ENCODE measurements at regions of chr4 and their contacts with region 1.

Region 1: DNA sequence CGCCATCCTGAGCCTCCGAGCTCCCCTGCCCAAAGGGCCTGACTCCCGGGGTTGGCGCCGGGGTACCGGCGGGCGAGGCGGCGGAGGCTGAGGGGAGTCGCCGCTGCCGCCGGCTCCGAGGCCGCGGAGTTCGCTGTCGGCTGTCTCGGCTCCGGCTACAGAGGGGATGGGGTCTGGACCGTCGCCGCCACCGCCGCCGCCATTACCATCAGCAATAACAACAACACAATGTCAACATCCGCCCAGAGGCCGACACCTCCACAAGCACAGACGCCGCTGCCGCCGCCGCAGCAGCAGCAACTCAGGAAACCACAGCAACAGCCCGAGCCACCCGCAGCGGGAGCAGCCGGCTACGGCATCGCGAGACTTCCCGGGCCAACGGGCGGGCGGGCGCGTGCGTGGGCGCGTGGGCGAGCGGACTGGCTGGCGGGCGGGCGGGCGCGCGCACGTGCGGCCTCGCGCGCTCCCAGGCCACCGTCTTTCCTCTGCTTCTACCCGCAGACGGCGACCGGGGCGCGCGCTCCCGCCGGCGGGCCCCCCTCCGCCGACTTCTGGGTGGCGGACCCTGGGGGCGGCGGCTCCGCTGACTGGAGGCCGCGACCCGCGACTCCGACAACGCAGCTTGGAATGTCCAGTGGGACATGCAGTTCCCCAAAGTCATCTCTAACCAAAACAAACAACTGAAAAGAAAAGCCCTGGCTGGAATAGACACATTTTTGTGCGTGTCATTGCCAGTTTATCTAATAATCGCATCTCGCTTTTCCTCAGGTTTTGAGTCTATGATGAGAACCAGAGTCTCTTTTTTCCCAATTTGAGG is at the start of gene CHIC2:
- DNase-seq: peak; percentile 94
- H3K4me3 ChIP-seq: peak within 1 kb of the TSS; percentile 55 to 98 (median 96)
- H3K27ac ChIP-seq: peak within 1 kb of the TSS; percentile 96
- H3K4me1 ChIP-seq: peaks cover 66% of the 10 kb centered on the region
- H3K27me3 ChIP-seq: no peaks in the 10 kb centered on the region
- CTCF ChIP-seq: no peak
- POLR2A ChIP-seq: peak; percentile 88
- total RNA-seq, gene CHIC2: 43.3 and 43.8 TPM in 2 replicates

Region 2: GRCh38 chr4:53994382-53995102 is 70.0 kb before region 1 on chr4:
- CTCF ChIA-PET with region 1: interaction called, 3 read pairs
- POLR2A ChIA-PET with region 1: no interaction called
- dilution Hi-C with region 1: no loop called
- intact Hi-C with region 1: loop called (anchors 1 kb)
- DNase-seq: peak; percentile 97
- H3K4me3 ChIP-seq: peak overlapping the region in 1 of 3 experiments; percentile 24
- H3K27ac ChIP-seq: peak overlapping the region; percentile 93
- H3K4me1 ChIP-seq: peaks cover 31% of the 10 kb centered on the region
- H3K27me3 ChIP-seq: no peaks in the 10 kb centered on the region
- CTCF ChIP-seq: no peak
- POLR2A ChIP-seq: no peak

Region 3: DNA sequence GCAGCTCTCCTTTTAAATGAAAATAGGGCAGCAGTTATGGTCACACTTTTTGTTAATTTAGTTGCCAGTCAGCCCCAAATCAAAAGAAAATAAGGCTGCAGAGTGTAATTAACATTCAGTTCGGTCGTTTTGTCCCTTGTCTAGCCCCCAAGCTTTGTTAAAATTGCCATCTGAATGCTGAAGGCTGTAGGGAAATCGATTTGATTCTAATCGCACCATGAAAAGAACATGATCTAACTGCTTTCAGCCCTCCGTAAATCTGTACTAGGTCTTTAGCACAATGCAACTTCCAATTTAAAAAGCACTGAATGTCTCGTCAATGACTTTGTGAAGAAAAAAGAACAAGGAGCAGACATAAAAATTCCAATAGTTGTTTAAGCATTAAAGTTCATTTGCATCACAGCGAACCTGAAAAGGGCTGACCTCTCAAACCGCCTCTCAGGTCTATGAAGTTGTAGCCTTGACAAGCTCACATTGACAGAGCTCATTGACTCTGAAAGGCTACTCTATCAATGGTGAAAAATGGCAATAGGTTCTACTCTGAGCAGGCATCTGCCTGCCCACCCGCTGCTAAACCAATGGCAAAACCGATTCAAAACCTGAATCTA is 49.0 kb before region 1 on chr4:
- CTCF ChIA-PET with region 1: no interaction called
- POLR2A ChIA-PET with region 1: no interaction called
- dilution Hi-C with region 1: no loop called
- intact Hi-C with region 1: no loop called
- DNase-seq: no peak
- H3K4me3 ChIP-seq: no peak overlapping the region
- H3K27ac ChIP-seq: no peak overlapping the region
- H3K4me1 ChIP-seq: no peaks in the 10 kb centered on the region
- H3K27me3 ChIP-seq: no peaks in the 10 kb centered on the region
- CTCF ChIP-seq: no peak
- POLR2A ChIP-seq: no peak

Region 4: DNA sequence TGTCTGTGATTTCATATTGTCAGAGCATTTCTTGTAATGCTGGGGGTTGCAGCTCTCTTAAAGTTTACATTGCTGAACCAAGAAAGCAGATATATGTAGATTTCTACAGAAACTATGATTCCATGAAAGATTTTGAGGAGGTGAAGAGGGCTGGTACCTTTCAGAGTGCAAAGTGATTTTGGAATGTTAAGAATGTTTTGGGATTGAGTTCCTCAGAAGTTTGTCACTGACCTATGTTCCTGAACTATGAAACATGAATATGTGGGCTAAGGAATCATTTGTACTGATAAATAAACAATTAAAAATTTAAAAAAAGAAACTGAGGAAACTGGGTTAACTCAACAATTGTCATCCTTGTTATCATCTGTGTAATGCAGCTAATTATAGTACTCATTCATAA is 12.2 kb after region 1 on chr4:
- CTCF ChIA-PET with region 1: interaction called, 3 read pairs
- POLR2A ChIA-PET with region 1: interaction called, 7 read pairs
- dilution Hi-C with region 1: no loop called
- intact Hi-C with region 1: loop called (anchors 1 kb)
- DNase-seq: peak; percentile 38
- H3K4me3 ChIP-seq: no peak overlapping the region
- H3K27ac ChIP-seq: peak overlapping the region; percentile 66
- H3K4me1 ChIP-seq: peaks cover 30% of the 10 kb centered on the region
- H3K27me3 ChIP-seq: no peaks in the 10 kb centered on the region
- CTCF ChIP-seq: no peak
- POLR2A ChIP-seq: no peak

Region 5: GRCh38 chr4:54099748-54100574 is 35.5 kb after region 1 on chr4 and contains the start of gene GSX2:
- CTCF ChIA-PET with region 1: interaction called, 4 read pairs
- POLR2A ChIA-PET with region 1: interaction called, 5 read pairs
- dilution Hi-C with region 1: no loop called
- intact Hi-C with region 1: loop called (anchors 2 kb)
- DNase-seq: no peak
- H3K4me3 ChIP-seq: peak within 1 kb of the TSS in 2 of 3 experiments; percentile 22 to 26
- H3K27ac ChIP-seq: no peak within 1 kb of the TSS
- H3K4me1 ChIP-seq: peaks cover 25% of the 10 kb centered on the region
- H3K27me3 ChIP-seq: peaks cover 75 to 95% of the 10 kb centered on the region in 2 experiments
- CTCF ChIP-seq: no peak
- POLR2A ChIP-seq: no peak
- total RNA-seq, gene GSX2: not detected in 2 replicates

Region 6: DNA sequence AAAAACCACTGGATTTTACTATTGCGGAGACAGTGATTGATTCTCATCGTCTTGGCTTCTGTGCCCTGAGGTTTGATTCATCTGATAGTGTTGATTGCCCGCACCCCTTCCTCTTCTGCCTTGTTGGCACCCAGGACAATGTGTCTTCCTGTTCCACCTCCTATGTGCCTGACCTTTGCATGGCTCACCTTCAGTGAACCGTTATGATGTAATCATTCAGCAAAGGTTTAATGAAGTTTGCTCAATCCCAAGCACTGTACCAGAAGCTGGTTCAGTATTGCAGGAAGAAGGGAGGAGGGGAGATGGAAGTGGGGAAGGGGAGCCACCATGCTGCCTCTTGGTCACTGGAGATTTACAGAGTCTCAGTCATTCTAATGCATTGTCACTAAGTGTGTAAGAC is 200.9 kb after region 1 on chr4:
- CTCF ChIA-PET with region 1: no interaction called
- POLR2A ChIA-PET with region 1: no interaction called
- dilution Hi-C with region 1: no loop called
- intact Hi-C with region 1: no loop called
- DNase-seq: no peak
- H3K4me3 ChIP-seq: no peak overlapping the region
- H3K27ac ChIP-seq: no peak overlapping the region
- H3K4me1 ChIP-seq: peaks cover 20% of the 10 kb centered on the region
- H3K27me3 ChIP-seq: peaks cover 5% of the 10 kb centered on the region in 2 experiments
- CTCF ChIP-seq: no peak
- POLR2A ChIP-seq: no peak